Common myeloid progenitor, CD34-positive (primary cell): ENCODE measurements at regions of chr16 and their contacts with region 1.

Region 1: DNA sequence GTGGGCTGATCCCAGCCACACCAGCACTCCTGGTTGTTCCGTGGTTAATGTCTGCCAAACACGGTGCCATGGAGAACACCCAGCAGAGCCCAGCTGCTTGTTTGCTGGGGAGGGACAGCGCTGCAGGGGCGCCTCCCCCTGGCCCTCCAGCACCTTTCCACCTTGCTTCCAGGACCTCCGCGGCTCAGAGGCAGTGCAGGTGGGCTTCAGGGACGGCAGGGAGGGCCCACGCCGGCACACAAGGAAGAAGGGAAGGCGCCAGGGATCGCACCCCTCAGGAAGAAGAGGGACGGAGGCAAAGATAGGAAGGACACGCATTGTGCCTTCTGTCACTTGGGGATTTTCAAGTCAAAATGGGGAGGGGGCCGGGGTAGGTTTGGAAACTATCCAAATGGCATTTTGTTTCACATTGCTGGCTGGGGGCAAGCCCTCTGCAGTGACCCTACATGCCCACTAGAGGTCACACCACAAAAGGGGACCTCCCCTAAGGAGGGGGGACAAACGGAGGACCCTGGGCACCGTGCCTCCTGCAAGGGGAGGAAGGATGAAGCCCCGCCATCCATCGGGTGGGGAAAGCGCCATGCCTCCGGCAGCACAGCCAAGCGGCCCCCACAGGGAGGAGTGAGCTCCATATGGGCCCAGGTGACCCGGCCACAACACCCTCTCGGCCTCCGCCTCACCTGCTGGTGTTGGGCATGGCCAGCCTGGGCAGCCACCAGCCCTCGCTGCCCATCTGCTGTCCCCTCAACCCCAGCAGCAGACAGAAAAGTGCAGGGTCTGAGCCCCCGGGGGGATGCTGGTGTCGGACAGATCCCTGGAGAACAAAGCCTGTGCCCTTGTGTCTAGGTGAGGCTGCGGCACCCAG is 7.5 kb upstream of the C16orf95 start:
- DNase-seq: peak; percentile 63 to 81 (median 76)
- H3K4me3 ChIP-seq: peak overlapping the region in 1 of 7 experiments; percentile 40
- H3K27ac ChIP-seq: no peak overlapping the region
- H3K4me1 ChIP-seq: peaks cover 0 to 10% (median 8%) of the 10 kb centered on the region in 4 experiments
- H3K27me3 ChIP-seq: no peaks in the 10 kb centered on the region

Region 2: GRCh38 chr16:87017365-87018012 is 307.2 kb before region 1 on chr16:
- CTCF ChIA-PET with region 1: no interaction called
- POLR2A ChIA-PET with region 1: no interaction called
- DNase-seq: peak; percentile 26 to 62 (median 55)
- H3K4me3 ChIP-seq: no peak overlapping the region
- H3K27ac ChIP-seq: no peak overlapping the region
- H3K4me1 ChIP-seq: peaks cover 0 to 10% (median 6%) of the 10 kb centered on the region in 4 experiments
- H3K27me3 ChIP-seq: peaks cover 0 to 42% (median 15%) of the 10 kb centered on the region in 5 experiments

Region 3: GRCh38 chr16:87391950-87392822 is 67.5 kb after region 1 on chr16 and contains the start of gene MAP1LC3B:
- CTCF ChIA-PET with region 1: interaction called, 14 read pairs
- POLR2A ChIA-PET with region 1: no interaction called
- DNase-seq: peak; percentile 94 to 97 (median 97)
- H3K4me3 ChIP-seq: peak within 1 kb of the TSS; percentile 63 to 93 (median 83)
- H3K27ac ChIP-seq: peak within 1 kb of the TSS; percentile 68 to 87
- H3K4me1 ChIP-seq: peaks cover 21 to 45% (median 37%) of the 10 kb centered on the region in 4 experiments
- H3K27me3 ChIP-seq: no peaks in the 10 kb centered on the region